ENCODE measurements at regions of chr3 and their contacts with region 1.

Region 1: GRCh38 chr3:12782172-12782815 is 14.2 kb upstream of the CAND2 start:
- DNase-seq: peak in 1 of 2 experiments; percentile 65
- ATAC-seq: peak; percentile 30 to 55; a peak in 2 of 6 replicates
- H3K4me3 ChIP-seq: no peak overlapping the region
- H3K27ac ChIP-seq: no peak overlapping the region
- H3K4me1 ChIP-seq: no peaks in the 10 kb centered on the region
- CTCF ChIP-seq: no peak
- EP300 ChIP-seq: no peak
- POLR2A ChIP-seq: no peak
- RAD21 ChIP-seq: no peak

Region 2: DNA sequence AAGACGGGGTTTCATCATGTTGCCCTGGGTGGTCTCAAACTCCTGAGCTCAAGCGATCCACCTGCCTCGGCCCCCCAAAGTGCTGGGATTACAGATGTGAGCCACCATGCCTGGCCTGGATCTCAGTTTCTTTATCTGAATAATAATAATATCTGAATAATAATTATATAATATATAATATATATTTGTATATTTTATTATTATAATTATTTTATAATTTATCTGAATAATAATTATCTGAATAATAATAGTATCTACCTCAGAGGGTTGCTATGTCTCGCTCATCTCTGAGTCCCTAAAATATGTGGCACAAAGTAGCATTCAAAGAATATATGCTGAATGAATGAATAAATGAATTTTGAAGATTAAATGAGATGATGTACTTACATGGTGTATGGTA is 68.0 kb before region 1 on chr3:
- CTCF ChIA-PET with region 1: no interaction called
- POLR2A ChIA-PET with region 1: no interaction called
- DNase-seq: no peak
- ATAC-seq: no peak
- H3K4me3 ChIP-seq: no peak overlapping the region
- H3K27ac ChIP-seq: no peak overlapping the region
- H3K4me1 ChIP-seq: no peaks in the 10 kb centered on the region
- CTCF ChIP-seq: no peak
- EP300 ChIP-seq: no peak
- POLR2A ChIP-seq: no peak
- RAD21 ChIP-seq: no peak

Region 3: DNA sequence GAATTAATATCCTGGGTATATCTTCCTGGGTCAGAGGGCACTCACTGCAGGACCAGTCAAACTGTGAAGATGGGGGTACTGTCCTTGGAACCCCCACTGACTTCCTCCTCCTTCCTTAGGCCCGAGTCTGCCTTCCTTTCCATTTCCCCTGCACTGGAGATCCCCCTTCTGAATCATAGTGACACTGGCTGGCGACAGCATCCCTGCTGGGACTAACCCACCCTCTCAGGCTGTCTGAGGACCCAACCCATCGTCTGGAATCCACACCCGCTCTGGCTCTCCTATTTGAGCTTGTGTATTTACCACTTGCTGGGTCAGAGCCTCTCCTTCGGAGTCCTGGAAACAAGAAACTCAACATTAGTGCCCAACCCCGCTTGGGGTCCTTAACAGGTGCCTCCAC is 44.5 kb before region 1 on chr3:
- CTCF ChIA-PET with region 1: no interaction called
- POLR2A ChIA-PET with region 1: no interaction called
- DNase-seq: no peak
- ATAC-seq: no peak; a peak in 1 of 6 replicates
- H3K4me3 ChIP-seq: no peak overlapping the region
- H3K27ac ChIP-seq: no peak overlapping the region
- H3K4me1 ChIP-seq: no peaks in the 10 kb centered on the region
- CTCF ChIP-seq: no peak
- EP300 ChIP-seq: no peak
- POLR2A ChIP-seq: no peak
- RAD21 ChIP-seq: no peak

Region 4: DNA sequence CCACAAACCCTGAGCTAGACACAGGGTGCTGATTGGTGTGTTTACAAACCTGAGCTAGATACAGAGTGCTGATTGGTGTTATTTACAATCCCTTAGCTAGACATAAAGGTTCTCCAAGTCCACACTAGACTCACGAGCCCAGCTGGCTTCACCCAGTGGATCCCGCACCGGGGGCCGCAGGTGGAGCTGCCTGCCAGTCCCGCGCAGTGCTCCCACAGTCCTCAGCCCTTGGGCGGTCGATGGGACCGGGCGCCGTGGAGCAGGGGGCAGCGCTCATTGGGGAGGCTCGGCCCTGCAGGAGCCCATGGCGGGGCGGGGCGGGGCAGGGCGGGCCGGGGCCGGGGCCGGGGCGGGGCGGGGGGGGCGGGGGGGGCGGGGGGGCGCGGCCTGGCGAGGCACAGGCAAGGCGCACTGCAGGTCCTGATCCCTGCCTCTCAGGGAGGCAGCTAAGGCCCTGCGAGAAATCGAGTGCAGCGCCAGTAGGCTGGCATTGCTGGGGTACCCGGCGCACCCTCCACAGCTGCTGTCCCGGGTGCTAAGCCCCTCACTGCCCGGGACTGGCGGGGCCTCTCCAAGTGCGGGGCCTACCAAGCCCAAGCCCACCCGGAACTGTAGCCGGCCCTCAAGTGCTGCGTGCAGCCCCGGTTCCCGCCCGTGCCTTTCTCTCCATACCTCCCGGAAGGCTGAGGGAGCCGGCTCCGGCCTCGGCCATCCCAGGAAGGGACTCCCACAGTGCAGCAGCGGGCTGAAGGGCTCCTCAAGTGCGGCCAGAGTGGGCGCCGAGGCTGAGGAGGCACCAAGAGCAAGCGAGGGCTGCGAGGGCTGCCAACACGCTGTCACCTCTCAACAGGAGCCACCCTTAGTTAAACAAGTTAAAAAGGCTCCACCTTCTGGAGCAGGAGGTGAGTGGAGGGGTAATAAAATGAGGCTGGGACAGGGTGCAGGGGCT is 13.4 kb before region 1 on chr3:
- CTCF ChIA-PET with region 1: interaction called, 13 read pairs
- POLR2A ChIA-PET with region 1: no interaction called
- DNase-seq: no peak
- ATAC-seq: no peak
- H3K4me3 ChIP-seq: no peak overlapping the region
- H3K27ac ChIP-seq: no peak overlapping the region
- H3K4me1 ChIP-seq: peaks cover 1% of the 10 kb centered on the region; the same call in 2 of the 3 replicates
- CTCF ChIP-seq: no peak
- EP300 ChIP-seq: no peak
- POLR2A ChIP-seq: no peak
- RAD21 ChIP-seq: no peak

Region 5: GRCh38 chr3:12852201-12852600 is 69.9 kb after region 1 on chr3:
- CTCF ChIA-PET with region 1: no interaction called
- POLR2A ChIA-PET with region 1: no interaction called
- DNase-seq: no peak
- ATAC-seq: no peak
- H3K4me3 ChIP-seq: no peak overlapping the region
- H3K27ac ChIP-seq: no peak overlapping the region
- H3K4me1 ChIP-seq: no peaks in the 10 kb centered on the region
- CTCF ChIP-seq: no peak
- EP300 ChIP-seq: no peak
- POLR2A ChIP-seq: no peak
- RAD21 ChIP-seq: no peak